ENCODE measurements at regions of chr20 and their contacts with region 1.

Region 1: DNA sequence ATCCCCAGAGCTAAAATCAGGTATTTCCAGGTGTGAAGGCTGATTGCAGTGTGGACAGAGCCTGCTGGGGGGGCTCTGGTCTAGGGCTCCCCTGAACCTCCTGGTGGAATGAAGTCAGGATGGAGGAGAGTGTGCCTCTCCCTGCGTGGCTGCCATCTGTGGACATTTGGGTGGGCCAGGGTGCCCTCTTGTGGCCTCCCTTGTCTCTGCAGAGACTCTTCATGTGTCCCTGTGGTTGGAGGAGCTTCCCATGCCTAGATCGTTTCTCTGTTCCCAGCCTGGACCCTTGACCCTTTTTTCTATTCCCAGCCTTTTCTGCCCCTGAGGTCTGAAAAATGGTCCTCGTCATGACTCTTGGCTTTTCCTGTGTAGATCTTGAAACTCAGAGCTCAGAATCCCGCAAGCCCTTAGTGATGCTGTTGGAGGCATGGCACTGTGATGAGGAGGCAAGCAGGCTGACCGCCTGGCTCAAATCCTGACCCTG is 9.9 kb upstream of the PSMF1 start:
- DNase-seq: peak; percentile 73
- H3K4me3 ChIP-seq: no peak overlapping the region; a peak in 1 of 4 replicates
- H3K27ac ChIP-seq: no peak overlapping the region
- H3K4me1 ChIP-seq: no peaks in the 10 kb centered on the region; a peak in 1 of 4 replicates
- H3K27me3 ChIP-seq: no peaks in the 10 kb centered on the region
- CTCF ChIP-seq: peak; percentile 72
- EP300 ChIP-seq: no peak
- RAD21 ChIP-seq: peak; percentile 78

Region 2: GRCh38 chr20:956330-956951 is 152.0 kb before region 1 on chr20:
- CTCF ChIA-PET with region 1: interaction called, 86 read pairs
- POLR2A ChIA-PET with region 1: no interaction called
- DNase-seq: peak; percentile 87
- H3K4me3 ChIP-seq: peak overlapping the region in 1 of 2 experiments; percentile 13; a peak in 1 of 4 replicates
- H3K27ac ChIP-seq: no peak overlapping the region
- H3K4me1 ChIP-seq: peaks cover 0 to 3% of the 10 kb centered on the region in 2 experiments; a peak in 1 of 4 replicates
- H3K27me3 ChIP-seq: no peaks in the 10 kb centered on the region; the same call in 1 of the 2 replicates
- CTCF ChIP-seq: peak; percentile 99
- EP300 ChIP-seq: no peak
- RAD21 ChIP-seq: peak; percentile 98

Region 3: DNA sequence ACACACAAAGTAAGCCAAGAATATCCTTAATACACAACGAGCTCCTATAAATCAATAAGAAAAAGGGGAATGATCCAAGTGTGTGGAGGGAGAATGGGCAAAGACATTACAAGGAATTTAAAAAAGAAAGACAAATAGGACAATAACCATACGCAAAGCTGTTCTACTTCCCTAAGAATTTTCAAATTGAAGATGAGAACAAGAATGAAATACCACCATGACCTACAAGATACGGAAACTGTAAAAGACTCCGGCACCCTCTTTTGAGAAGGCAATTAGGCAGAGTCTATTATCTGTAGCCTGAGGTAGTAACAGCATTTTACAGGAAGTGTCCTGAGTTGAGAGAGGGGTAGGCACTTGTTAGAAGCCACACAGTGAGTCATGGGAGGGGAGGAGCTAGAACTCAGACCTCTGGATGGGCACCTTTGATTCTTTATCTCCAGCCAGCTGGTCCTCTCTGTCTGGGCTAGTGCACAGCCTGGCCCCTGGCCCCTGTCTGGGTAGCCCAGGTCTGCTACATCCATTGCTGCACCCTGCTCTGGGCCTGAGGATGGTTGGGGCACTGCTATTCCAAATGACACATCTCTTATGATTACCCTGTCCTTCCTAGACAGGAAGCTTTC is 121.6 kb before region 1 on chr20:
- CTCF ChIA-PET with region 1: interaction called, 11 read pairs
- POLR2A ChIA-PET with region 1: no interaction called
- DNase-seq: no peak
- H3K4me3 ChIP-seq: no peak overlapping the region
- H3K27ac ChIP-seq: no peak overlapping the region
- H3K4me1 ChIP-seq: peaks cover 0 to 2% of the 10 kb centered on the region in 2 experiments; a peak in 1 of 4 replicates
- H3K27me3 ChIP-seq: peaks cover 5% of the 10 kb centered on the region; the same call in 1 of the 2 replicates
- CTCF ChIP-seq: no peak
- EP300 ChIP-seq: no peak
- RAD21 ChIP-seq: no peak

Region 4: DNA sequence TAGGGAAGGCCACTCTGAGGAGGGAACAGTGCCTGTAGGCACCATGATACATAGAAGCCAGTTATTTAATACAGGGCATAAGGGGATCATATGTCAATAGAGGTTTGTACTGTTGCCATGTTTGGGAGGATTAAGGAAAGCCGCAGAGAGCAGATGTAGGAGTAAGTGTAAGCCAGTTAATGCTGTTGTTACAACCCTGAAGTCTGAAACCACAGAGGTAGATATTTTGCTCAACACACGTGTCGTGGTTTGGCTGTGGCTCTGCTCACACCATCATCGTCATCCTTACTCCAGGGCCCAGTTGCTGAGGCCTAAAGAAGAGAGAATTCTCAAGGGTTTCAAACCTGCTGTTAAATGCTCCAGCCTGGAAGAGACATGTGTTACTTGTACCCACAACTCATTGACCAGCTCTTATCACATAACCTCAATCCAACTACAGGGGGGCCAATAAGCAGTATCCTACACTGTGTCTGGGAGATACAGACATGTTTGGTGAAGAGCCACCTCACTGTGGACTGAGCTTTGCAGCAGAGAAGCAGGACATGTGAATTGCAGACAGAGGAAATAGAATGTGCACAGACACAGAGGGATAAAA is 21.1 kb before region 1 on chr20:
- CTCF ChIA-PET with region 1: interaction called, 40 read pairs
- POLR2A ChIA-PET with region 1: no interaction called
- DNase-seq: no peak
- H3K4me3 ChIP-seq: no peak overlapping the region
- H3K27ac ChIP-seq: no peak overlapping the region
- H3K4me1 ChIP-seq: no peaks in the 10 kb centered on the region
- H3K27me3 ChIP-seq: no peaks in the 10 kb centered on the region
- CTCF ChIP-seq: no peak
- EP300 ChIP-seq: no peak
- RAD21 ChIP-seq: no peak

Region 5: DNA sequence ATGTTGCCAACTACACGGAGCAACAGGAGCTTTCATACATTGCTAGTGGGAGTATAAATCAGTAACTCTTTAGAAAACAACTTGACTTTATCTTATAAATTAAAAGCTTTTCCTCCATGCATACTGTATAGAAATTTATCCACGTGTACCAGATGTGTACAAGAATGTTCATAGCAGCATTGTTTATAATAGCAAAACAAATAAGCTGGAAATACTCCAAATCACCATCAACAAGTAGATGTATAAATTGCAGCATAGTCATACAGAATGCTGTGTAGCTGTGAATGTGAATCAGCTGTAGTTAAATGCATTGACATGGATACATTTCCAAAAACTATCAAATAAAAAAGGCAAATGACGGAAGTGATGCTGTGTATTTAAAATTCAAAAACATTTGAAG is 15.9 kb after region 1 on chr20:
- CTCF ChIA-PET with region 1: interaction called, 41 read pairs
- POLR2A ChIA-PET with region 1: no interaction called
- DNase-seq: no peak
- H3K4me3 ChIP-seq: no peak overlapping the region
- H3K27ac ChIP-seq: no peak overlapping the region
- H3K4me1 ChIP-seq: peaks cover 12 to 22% of the 10 kb centered on the region in 2 experiments; a peak in 3 of 4 replicates
- H3K27me3 ChIP-seq: no peaks in the 10 kb centered on the region
- CTCF ChIP-seq: no peak
- EP300 ChIP-seq: no peak
- RAD21 ChIP-seq: no peak

Measured in SK-N-SH (cell line).